Endothelial cell of umbilical vein (primary cell): ENCODE measurements at regions of chr18 and their contacts with region 1.

Region 1: DNA sequence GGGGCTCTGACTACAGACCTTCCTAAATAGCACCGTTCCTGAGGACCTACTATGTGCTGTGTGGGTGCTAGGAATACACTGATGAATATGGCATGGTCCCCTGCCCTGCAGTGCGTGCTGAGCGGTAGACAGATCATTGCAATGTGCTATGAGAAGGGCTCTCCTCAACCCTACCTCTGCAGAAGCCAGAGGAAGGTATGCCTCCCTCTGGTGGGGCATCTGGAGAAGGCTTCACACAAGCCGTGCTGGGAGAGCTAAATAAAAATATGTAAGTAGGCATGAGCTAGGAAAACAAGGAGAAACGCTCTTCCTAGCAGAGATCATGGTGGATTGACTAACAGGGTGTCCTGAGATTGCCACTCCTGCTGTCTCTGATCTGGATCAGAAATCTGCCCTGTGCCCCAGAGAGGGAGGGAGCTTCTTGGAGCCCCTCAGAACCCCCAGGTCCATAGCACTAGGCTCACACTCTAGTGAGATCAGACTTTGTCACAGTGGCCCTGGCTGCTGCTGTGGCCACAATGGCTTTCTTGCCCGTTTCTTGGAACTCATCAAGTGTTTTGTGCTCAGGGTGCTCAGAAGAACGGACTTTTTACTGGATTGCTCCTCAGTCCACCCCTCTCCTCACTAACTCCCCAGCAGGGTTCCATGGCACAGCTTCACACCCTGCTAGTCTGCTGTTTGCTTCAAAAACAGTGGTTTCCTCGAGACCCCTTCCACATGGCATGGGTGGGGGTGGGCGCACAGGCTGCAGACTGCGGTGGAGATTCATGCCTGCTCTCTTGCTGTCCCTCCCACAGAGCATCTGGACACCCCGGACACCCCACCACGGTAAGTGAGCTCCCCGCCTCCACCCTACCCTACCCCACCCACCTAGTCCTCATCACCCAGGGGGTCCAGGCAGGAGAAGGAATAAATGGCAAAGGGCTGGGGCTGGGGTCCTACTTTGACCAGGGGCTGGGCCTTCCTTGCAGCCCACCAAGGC is 14.2 kb downstream of the SIGLEC15 start:
- DNase-seq: peak; percentile 70
- H3K4me3 ChIP-seq: no peak overlapping the region
- H3K27ac ChIP-seq: no peak overlapping the region
- H3K4me1 ChIP-seq: peaks cover 4% of the 10 kb centered on the region
- H3K27me3 ChIP-seq: peaks cover 24 to 38% of the 10 kb centered on the region in 2 experiments
- CTCF ChIP-seq: peak; percentile 63 to 79
- POLR2A ChIP-seq: no peak

Region 2: GRCh38 chr18:45722899-45723298 is 116.8 kb before region 1 on chr18:
- CTCF ChIA-PET with region 1: interaction called, 307 read pairs
- POLR2A ChIA-PET with region 1: interaction called, 6 read pairs
- dilution Hi-C with region 1: no loop called
- intact Hi-C with region 1: loop called (anchors 1 kb)
- DNase-seq: peak; percentile 83
- H3K4me3 ChIP-seq: no peak overlapping the region
- H3K27ac ChIP-seq: no peak overlapping the region
- H3K4me1 ChIP-seq: no peaks in the 10 kb centered on the region
- H3K27me3 ChIP-seq: peaks cover 26 to 41% of the 10 kb centered on the region in 2 experiments
- CTCF ChIP-seq: peak; percentile 76 to 93
- POLR2A ChIP-seq: no peak

Region 3: DNA sequence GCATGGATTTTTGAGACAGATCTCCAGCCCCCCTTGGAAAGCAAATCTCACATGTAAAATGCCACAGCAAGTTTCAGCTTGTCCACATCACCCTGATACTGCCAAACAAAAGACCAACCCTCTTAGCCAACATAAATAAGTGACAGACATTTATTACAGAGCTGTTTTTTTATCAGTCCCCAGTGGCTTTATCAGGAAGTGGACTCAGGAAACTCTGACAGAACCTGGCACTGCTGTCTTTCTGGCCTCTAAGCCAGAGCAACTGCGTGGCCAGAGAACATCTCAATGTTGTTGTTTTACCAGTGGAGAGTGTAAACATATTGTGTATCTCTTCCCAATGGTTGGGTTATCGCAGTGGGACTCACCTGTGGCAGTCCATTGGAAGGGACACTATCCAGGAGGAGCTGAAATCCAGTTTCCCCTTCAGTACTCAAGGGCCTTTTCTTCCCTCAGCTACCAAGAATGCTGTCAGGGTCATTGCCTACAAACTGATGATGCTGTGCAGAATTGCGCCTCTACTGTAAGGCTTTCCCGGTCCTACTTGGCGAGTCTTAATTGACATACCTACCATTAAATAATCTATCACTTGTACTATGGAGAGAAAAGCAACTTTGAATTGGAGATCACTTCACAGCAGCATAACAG is 93.8 kb before region 1 on chr18:
- CTCF ChIA-PET with region 1: interaction called, 16 read pairs
- POLR2A ChIA-PET with region 1: no interaction called
- dilution Hi-C with region 1: no loop called
- intact Hi-C with region 1: no loop called
- DNase-seq: peak; percentile 60
- H3K4me3 ChIP-seq: no peak overlapping the region
- H3K27ac ChIP-seq: no peak overlapping the region
- H3K4me1 ChIP-seq: peaks cover 12% of the 10 kb centered on the region
- H3K27me3 ChIP-seq: peaks cover 5 to 7% of the 10 kb centered on the region in 2 experiments
- CTCF ChIP-seq: no peak
- POLR2A ChIP-seq: no peak

Region 4: DNA sequence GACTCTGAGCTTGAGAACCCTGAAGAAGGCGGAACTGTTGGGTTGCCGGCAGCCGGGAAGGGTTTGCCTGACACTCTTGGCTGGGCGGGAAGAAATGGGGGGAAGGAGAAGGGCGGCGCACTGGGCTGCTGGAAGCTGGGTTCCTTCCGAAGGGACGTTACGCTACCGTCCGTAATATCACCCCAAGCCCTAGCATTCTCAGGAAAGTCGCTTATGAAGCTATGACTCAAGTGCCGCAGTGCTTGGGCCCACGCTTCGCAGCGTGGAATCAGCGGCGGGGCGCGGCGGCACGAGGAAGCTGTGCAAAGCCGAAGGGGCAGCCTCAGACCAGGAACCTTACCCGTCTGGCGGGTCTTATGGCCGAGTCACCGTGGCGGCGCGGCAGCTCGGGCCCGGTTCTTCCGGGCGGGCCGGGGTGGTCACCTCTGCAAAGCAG is 64.4 kb before region 1 on chr18:
- CTCF ChIA-PET with region 1: interaction called, 24 read pairs
- POLR2A ChIA-PET with region 1: interaction called, 3 read pairs
- dilution Hi-C with region 1: no loop called
- intact Hi-C with region 1: loop called (anchors 1 kb)
- DNase-seq: peak; percentile 89
- H3K4me3 ChIP-seq: peak overlapping the region; percentile 27 to 62 (median 55)
- H3K27ac ChIP-seq: peak overlapping the region; percentile 46
- H3K4me1 ChIP-seq: peaks cover 9% of the 10 kb centered on the region
- H3K27me3 ChIP-seq: peaks cover 3 to 16% of the 10 kb centered on the region in 2 experiments
- CTCF ChIP-seq: no peak
- POLR2A ChIP-seq: peak; percentile 80

Region 5: DNA sequence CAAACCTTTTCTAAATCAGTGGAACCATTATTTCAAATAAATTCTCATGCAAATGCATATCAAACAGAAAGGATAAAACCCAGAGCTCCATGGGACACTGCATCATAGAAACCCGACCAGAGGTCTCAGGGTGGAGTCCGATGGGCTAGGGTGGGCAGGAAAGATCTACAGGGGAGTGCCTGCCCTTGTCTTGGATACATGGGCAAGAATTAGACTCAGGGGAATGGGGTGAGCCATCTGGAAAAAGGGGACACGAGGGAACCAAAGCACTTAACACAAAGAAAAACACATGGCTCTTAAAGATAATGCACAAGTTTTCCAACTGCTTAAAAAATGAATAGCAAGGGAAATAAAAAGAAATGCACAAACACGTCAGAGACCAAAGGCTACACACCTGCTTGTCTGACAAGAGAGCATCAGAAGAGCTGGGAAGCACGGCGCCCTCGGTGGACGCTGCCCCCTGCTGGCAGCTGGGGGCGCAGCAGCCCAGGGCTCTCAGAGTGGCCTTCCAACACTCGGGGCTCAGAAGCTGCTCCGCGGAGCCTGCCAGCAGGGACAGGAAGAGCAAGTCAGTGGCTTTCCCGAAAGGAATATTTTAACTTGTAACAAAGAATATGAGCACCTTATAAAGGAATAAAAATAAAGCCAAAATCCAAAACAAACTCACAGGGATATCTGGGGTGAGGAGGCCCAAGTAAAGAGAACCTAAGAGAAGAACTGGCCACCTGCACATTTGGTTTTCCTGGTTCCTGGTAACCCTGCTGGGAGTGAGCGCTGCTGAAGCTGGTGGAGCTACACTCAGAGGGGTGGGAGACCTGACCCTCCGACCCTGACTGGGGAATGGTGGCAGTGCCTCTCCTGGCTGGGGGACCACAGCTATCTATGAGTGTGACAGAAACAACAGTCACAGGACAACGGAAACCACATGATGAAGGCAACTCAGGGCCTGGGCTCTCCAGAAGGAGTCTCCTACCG is 40.3 kb after region 1 on chr18:
- CTCF ChIA-PET with region 1: interaction called, 38 read pairs
- POLR2A ChIA-PET with region 1: no interaction called
- dilution Hi-C with region 1: no loop called
- intact Hi-C with region 1: loop called (anchors 1 kb)
- DNase-seq: peak; percentile 75
- H3K4me3 ChIP-seq: no peak overlapping the region
- H3K27ac ChIP-seq: no peak overlapping the region
- H3K4me1 ChIP-seq: no peaks in the 10 kb centered on the region
- H3K27me3 ChIP-seq: no peaks in the 10 kb centered on the region
- CTCF ChIP-seq: peak; percentile 99 to 100
- POLR2A ChIP-seq: no peak